WTC11 (cell line): ENCODE measurements at regions of chr9 and their contacts with region 1.

Region 1: GRCh38 chr9:126704873-126705766 is 91.4 kb downstream of the LMX1B start:
- DNase-seq: peak; percentile 94
- ATAC-seq: peak; percentile 43
- H3K4me3 Mint-ChIP-seq: peak overlapping the region; percentile 49
- H3K27ac Mint-ChIP-seq: no peak overlapping the region
- H3K4me1 Mint-ChIP-seq: peaks cover 17% of the 10 kb centered on the region
- H3K27me3 Mint-ChIP-seq: peaks cover 62% of the 10 kb centered on the region
- CTCF ChIP-seq: peak; percentile 78

Region 2: DNA sequence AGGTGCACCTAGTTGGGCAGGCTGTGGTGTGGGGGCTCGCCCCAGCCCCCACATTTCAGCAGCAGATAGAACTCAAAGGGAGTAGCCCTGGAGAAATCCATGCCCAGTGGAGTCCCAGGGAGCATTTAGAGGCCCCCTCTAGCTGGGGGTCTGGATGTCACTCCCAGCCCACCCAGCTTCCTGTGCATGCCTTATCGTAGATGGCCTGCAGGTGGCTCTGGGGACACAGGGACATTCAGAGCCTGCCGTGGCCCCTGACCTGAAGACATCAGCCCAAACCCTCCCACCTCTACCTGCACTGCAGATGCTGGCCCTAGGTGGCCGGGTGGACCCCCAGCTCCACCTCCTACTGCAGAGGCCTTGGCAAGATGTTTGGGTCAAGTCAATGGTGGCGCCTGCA is 140.4 kb before region 1 on chr9:
- CTCF ChIA-PET with region 1: interaction called, 18 read pairs
- POLR2A ChIA-PET with region 1: no interaction called
- DNase-seq: peak; percentile 61
- ATAC-seq: peak; percentile 88
- H3K4me3 Mint-ChIP-seq: no peak overlapping the region
- H3K27ac Mint-ChIP-seq: no peak overlapping the region
- H3K4me1 Mint-ChIP-seq: no peaks in the 10 kb centered on the region
- H3K27me3 Mint-ChIP-seq: no peaks in the 10 kb centered on the region; the same call in 1 of the 2 replicates
- CTCF ChIP-seq: peak; percentile 37; the same call in 1 of the 2 replicates

Region 3: GRCh38 chr9:126626127-126626925 is 78.8 kb before region 1 on chr9:
- CTCF ChIA-PET with region 1: interaction called, 21 read pairs
- POLR2A ChIA-PET with region 1: no interaction called
- DNase-seq: peak; percentile 55
- ATAC-seq: peak; percentile 11
- H3K4me3 Mint-ChIP-seq: peak overlapping the region; percentile 72
- H3K27ac Mint-ChIP-seq: no peak overlapping the region
- H3K4me1 Mint-ChIP-seq: peaks cover 54% of the 10 kb centered on the region
- H3K27me3 Mint-ChIP-seq: peaks cover 100% of the 10 kb centered on the region
- CTCF ChIP-seq: no peak

Region 4: DNA sequence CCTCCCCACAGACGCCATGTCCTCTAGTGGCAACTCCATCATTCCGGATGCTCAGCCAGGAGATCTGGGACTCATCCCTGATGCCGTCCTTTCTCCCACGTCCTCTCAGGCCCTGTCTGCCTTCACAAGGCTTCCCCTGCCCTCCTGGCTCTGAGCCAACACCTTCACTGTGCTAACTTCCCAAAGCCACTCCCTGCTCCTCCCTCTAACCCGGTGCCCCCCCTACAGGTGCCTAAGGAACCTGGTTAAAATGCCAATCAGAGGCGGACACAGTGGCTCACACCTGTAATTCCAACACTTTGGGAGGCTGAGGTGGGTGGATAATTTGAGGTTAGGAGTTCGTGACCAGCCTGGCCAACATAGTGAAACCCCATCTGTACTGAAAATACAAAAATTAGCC is 23.8 kb before region 1 on chr9:
- CTCF ChIA-PET with region 1: interaction called, 112 read pairs
- POLR2A ChIA-PET with region 1: no interaction called
- DNase-seq: peak; percentile 51
- ATAC-seq: peak; percentile 11
- H3K4me3 Mint-ChIP-seq: no peak overlapping the region
- H3K27ac Mint-ChIP-seq: no peak overlapping the region
- H3K4me1 Mint-ChIP-seq: peaks cover 46% of the 10 kb centered on the region
- H3K27me3 Mint-ChIP-seq: peaks cover 92% of the 10 kb centered on the region
- CTCF ChIP-seq: no peak

Region 5: GRCh38 chr9:126743041-126743440 is 37.9 kb after region 1 on chr9:
- CTCF ChIA-PET with region 1: interaction called, 31 read pairs
- POLR2A ChIA-PET with region 1: no interaction called
- DNase-seq: no peak
- ATAC-seq: no peak
- H3K4me3 Mint-ChIP-seq: no peak overlapping the region
- H3K27ac Mint-ChIP-seq: no peak overlapping the region
- H3K4me1 Mint-ChIP-seq: peaks cover 7% of the 10 kb centered on the region; the same call in 1 of the 2 replicates
- H3K27me3 Mint-ChIP-seq: peaks cover 38% of the 10 kb centered on the region
- CTCF ChIP-seq: no peak

Region 6: DNA sequence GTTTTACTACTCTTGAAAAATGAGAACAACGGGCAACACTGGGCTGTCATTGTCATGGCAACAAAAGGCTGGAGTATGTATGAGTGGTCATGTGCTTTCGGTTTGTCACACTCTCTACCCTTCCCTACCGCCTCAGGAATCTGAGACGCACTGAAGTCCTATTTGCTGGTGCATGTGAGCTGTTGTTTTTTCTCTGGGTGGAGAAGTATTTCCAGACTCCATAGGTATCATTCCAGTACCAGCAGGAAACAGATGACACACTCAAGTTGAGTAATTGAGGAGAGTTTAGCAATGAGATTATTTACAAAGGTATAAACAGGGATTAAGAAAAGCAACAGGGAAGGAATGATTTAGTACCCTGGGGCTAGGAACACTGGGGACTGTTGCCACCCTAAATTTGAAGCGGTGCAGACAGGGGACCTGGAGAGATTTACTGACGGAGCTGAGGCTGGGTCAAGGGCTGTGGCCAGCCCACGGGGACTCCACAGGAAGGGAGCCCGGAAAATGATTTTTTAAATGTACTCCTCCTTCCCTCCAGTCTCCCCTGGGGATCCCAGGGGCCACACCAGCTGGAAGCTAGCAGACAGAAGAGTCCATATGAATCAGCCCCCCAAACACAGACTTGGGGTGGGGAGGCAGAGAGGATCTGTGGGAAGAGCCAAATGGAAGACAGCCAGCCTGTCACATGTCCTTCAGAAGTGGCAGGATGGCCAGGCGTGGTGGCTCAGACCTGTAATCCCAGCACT is 86.5 kb after region 1 on chr9:
- CTCF ChIA-PET with region 1: interaction called, 734 read pairs
- POLR2A ChIA-PET with region 1: no interaction called
- DNase-seq: no peak
- ATAC-seq: no peak
- H3K4me3 Mint-ChIP-seq: no peak overlapping the region
- H3K27ac Mint-ChIP-seq: no peak overlapping the region
- H3K4me1 Mint-ChIP-seq: no peaks in the 10 kb centered on the region
- H3K27me3 Mint-ChIP-seq: peaks cover 44% of the 10 kb centered on the region
- CTCF ChIP-seq: no peak

Region 7: GRCh38 chr9:126947529-126947928 is 242.4 kb after region 1 on chr9:
- CTCF ChIA-PET with region 1: no interaction called
- POLR2A ChIA-PET with region 1: no interaction called
- DNase-seq: peak; percentile 54
- ATAC-seq: peak; percentile 100
- H3K4me3 Mint-ChIP-seq: no peak overlapping the region
- H3K27ac Mint-ChIP-seq: peak overlapping the region; percentile 64; the same call in 1 of the 2 replicates
- H3K4me1 Mint-ChIP-seq: peaks cover 10% of the 10 kb centered on the region
- H3K27me3 Mint-ChIP-seq: no peaks in the 10 kb centered on the region; the same call in 1 of the 2 replicates
- CTCF ChIP-seq: no peak; the same call in 1 of the 2 replicates